Right cardiac atrium (tissue), 5 donors: ENCODE measurements at regions of chr11 and their contacts with region 1.

Region 1: DNA sequence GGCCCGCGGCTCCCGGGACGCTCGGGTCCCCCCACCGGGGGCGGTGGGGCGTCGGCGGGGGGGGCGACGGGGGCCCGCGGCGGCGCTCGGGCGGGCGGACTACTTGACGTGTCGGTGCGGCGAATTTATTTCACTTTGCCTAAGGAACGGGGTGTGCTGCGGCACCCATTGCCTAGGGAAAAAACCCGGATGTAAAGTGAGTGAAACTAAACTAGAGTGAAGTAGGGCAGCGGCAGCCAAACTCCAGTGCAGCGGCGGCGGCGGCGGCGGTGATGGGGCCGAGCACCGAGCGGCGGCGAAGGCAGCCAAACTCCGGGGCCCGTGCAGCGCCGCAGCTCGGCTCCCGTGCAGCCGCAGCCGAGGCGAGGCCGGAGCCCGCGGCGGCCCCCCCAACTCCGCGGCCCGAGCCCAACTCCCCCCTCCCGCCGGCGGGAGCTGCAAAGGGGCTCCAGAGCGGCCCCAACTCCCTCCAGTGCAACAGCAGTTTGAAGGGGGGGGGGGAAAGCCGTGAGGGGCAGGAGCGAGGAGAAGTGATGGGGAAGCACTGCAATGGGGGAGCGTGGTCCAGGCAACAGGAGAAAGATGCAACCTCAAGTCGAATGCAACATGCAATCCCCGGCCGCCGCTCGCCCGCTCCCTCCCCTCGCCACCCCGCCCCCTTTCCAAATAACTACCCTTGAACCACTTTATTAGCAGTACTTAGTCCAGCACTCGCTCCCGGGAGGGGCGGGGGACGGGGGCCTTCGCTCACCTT is 647 bp upstream of the PHF21A start:
- DNase-seq: peak; percentile 81 to 91 (median 90)
- ATAC-seq: peak; percentile 35 to 37
- H3K4me3 ChIP-seq: peak overlapping the region; percentile 99
- H3K27ac ChIP-seq: peak overlapping the region; percentile 100
- H3K4me1 ChIP-seq: no peaks in the 10 kb centered on the region
- H3K27me3 ChIP-seq: no peaks in the 10 kb centered on the region

Region 2: DNA sequence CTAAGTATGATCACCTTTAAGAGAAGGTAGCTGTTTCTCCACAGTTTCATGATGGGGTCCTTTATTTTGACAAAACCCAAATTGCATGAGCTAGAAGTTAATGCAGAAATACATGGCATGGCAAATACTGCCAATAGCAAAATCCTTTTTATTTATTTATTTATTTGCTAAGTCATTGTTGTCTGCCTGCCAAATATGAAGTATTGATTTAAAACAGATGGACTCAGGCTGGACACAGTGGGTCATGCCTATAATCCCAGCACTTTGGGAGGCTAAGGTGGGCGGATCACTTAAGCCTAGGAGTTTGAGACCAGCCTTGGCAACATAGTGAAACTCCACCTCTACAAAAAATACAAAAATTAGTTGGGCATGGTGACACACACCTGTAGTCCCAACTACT is 147.1 kb before region 1 on chr11:
- intact Hi-C with region 1: no loop called
- DNase-seq: no peak
- ATAC-seq: no peak
- H3K4me3 ChIP-seq: no peak overlapping the region
- H3K27ac ChIP-seq: no peak overlapping the region
- H3K4me1 ChIP-seq: no peaks in the 10 kb centered on the region
- H3K27me3 ChIP-seq: no peaks in the 10 kb centered on the region

Region 3: GRCh38 chr11:46050003-46050461 is 71.9 kb before region 1 on chr11:
- intact Hi-C with region 1: loop called in 1 of 4 experiments (anchors 10 kb)
- DNase-seq: peak in 2 of 3 donors; percentile 21 to 58
- ATAC-seq: peak; percentile 84 to 87
- H3K4me3 ChIP-seq: no peak overlapping the region
- H3K27ac ChIP-seq: peak overlapping the region; percentile 0
- H3K4me1 ChIP-seq: peaks cover 5% of the 10 kb centered on the region
- H3K27me3 ChIP-seq: no peaks in the 10 kb centered on the region

Region 4: GRCh38 chr11:46238967-46239800 is 117.3 kb after region 1 on chr11:
- intact Hi-C with region 1: loop called in 1 of 4 experiments (anchors 2 kb)
- DNase-seq: peak; percentile 86 to 96 (median 95)
- ATAC-seq: peak; percentile 87 to 89
- H3K4me3 ChIP-seq: peak overlapping the region; percentile 41
- H3K27ac ChIP-seq: peak overlapping the region; percentile 93
- H3K4me1 ChIP-seq: peaks cover 8% of the 10 kb centered on the region
- H3K27me3 ChIP-seq: no peaks in the 10 kb centered on the region

Region 5: GRCh38 chr11:46308631-46309419 is 186.9 kb after region 1 on chr11:
- intact Hi-C with region 1: loop called in 3 of 4 experiments (anchors 10 kb)
- DNase-seq: peak; percentile 81 to 94 (median 92)
- ATAC-seq: peak; percentile 83 to 86
- H3K4me3 ChIP-seq: no peak overlapping the region
- H3K27ac ChIP-seq: no peak overlapping the region
- H3K4me1 ChIP-seq: no peaks in the 10 kb centered on the region
- H3K27me3 ChIP-seq: no peaks in the 10 kb centered on the region

Region 6: GRCh38 chr11:46315033-46315738 is 193.3 kb after region 1 on chr11:
- intact Hi-C with region 1: loop called in 2 of 4 experiments (anchors 10 kb)
- DNase-seq: peak; percentile 76 to 80 (median 77)
- ATAC-seq: peak; percentile 42 to 67
- H3K4me3 ChIP-seq: no peak overlapping the region
- H3K27ac ChIP-seq: no peak overlapping the region
- H3K4me1 ChIP-seq: peaks cover 2% of the 10 kb centered on the region
- H3K27me3 ChIP-seq: no peaks in the 10 kb centered on the region